PC-9 (cell line): ENCODE measurements at regions of chr6 and their contacts with region 1.

Region 1: GRCh38 chr6:45377554-45378333 is at the start of gene SUPT3H:
- DNase-seq: peak; percentile 76 to 89
- H3K4me3 ChIP-seq: peak within 1 kb of the TSS; percentile 93
- H3K27ac ChIP-seq: peak within 1 kb of the TSS; percentile 94
- H3K4me1 ChIP-seq: peaks cover 8% of the 10 kb centered on the region
- H3K27me3 ChIP-seq: no peaks in the 10 kb centered on the region
- CTCF ChIP-seq: no peak
- total RNA-seq, gene SUPT3H: 9.0 and 9.2 TPM in 2 replicates

Region 2: DNA sequence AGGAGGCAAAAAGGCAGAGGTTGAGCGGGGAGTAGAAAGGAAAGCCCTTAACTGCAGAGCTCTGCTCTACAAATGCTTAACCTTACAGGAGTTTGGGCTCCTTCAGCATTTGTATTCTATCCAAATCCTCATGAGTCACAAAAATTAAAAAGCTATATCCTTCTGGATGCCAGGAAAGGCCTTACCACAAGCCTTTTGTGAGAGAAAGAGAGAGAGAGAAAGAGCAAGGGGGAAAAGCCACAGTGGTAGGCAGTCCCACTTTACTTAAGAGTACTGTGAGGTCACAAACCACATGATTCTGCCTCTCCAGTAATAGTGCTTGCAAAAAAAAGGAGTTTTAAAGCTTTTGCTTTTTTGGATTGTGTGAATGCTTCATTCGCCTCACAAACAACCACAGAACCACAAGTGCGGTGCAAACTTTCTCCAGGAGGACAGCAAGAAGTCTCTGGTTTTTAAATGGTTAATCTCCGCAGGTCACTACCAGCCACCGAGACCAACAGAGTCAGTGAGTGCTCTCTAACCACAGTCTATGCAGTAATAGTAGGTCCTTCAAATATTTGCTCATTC is 49.7 kb before region 1 on chr6 and contains the start of gene RUNX2:
- CTCF ChIA-PET with region 1: no interaction called
- POLR2A ChIA-PET with region 1: interaction called, 10 read pairs
- intact Hi-C with region 1: no loop called
- DNase-seq: no peak
- H3K4me3 ChIP-seq: no peak within 1 kb of the TSS
- H3K27ac ChIP-seq: no peak within 1 kb of the TSS
- H3K4me1 ChIP-seq: no peaks in the 10 kb centered on the region
- H3K27me3 ChIP-seq: no peaks in the 10 kb centered on the region
- CTCF ChIP-seq: no peak
- total RNA-seq, gene RUNX2: 10.4 and 12.5 TPM in 2 replicates